ENCODE measurements at regions of chr1 and their contacts with region 1.

Region 1: GRCh38 chr1:27603681-27604578 is at the start of gene AHDC1:
- DNase-seq: peak; percentile 93 to 94
- H3K4me3 ChIP-seq: peak within 1 kb of the TSS; percentile 92 to 100 (median 95)
- H3K27ac ChIP-seq: peak within 1 kb of the TSS; percentile 94 to 97
- H3K4me1 ChIP-seq: peaks cover 18 to 23% of the 10 kb centered on the region in 2 donors
- H3K27me3 ChIP-seq: no peaks in the 10 kb centered on the region
- CTCF ChIP-seq: peak in 1 of 3 donors; percentile 42
- POLR2A ChIP-seq: peak; percentile 75
- total RNA-seq, gene AHDC1: 10.7 to 17.1 (median 15.4) TPM

Region 2: GRCh38 chr1:27392096-27392777 is 211.7 kb before region 1 on chr1 and contains the start of gene GPR3:
- intact Hi-C with region 1: loop called (anchors 10 kb)
- DNase-seq: peak; percentile 86 to 87
- H3K4me3 ChIP-seq: peak within 1 kb of the TSS; percentile 33 to 75 (median 54)
- H3K27ac ChIP-seq: peak within 1 kb of the TSS; percentile 46 to 71
- H3K4me1 ChIP-seq: peaks cover 0 to 8% of the 10 kb centered on the region in 2 donors
- H3K27me3 ChIP-seq: no peaks in the 10 kb centered on the region
- CTCF ChIP-seq: peak; percentile 14 to 47 (median 42)
- POLR2A ChIP-seq: no peak
- total RNA-seq, gene GPR3: 0.16 to 0.66 TPM in 2 of 3 donors, not detected in the other

Region 3: GRCh38 chr1:27556781-27557595 is 46.9 kb before region 1 on chr1:
- intact Hi-C with region 1: loop called (anchors 5 kb)
- DNase-seq: peak; percentile 87 to 96
- H3K4me3 ChIP-seq: peak overlapping the region; percentile 16 to 52 (median 30)
- H3K27ac ChIP-seq: peak overlapping the region; percentile 87 to 92
- H3K4me1 ChIP-seq: peaks cover 25 to 31% of the 10 kb centered on the region in 2 donors
- H3K27me3 ChIP-seq: no peaks in the 10 kb centered on the region
- CTCF ChIP-seq: peak; percentile 75 to 93 (median 83)
- POLR2A ChIP-seq: no peak

Region 4: DNA sequence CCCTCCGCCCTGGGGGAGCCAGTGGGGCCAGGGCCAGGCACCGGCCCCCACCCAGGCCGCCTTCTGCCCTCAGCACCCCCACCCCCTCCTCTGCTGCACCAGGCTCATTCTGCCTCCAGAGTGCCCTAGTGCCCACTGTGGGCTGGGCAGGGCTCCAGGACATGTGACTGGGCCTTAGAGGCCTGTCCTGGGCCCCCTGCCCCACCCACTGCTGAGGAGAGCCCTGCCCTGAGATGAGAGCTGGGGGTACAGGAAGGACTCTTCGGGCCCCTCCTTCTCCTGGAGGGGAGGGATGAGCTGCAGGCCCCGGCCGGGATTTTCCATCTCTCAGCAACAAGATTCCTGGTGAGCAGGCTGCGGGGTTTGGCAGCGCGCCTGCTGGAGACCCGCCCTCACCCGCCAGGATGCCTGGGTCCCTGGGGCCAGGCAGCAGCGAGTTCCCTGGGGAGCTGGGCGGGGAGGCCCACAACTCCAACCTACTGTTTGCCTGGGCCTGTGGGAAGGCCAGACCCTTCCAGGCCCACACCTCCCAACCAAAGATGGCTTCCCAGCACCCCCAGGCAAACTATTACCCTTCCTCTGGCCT is 14.0 kb before region 1 on chr1:
- intact Hi-C with region 1: no loop called
- DNase-seq: no peak
- H3K4me3 ChIP-seq: peak overlapping the region in 1 of 3 donors; percentile 11
- H3K27ac ChIP-seq: peak overlapping the region; percentile 64 to 93
- H3K4me1 ChIP-seq: peaks cover 21 to 33% of the 10 kb centered on the region in 2 donors
- H3K27me3 ChIP-seq: no peaks in the 10 kb centered on the region
- CTCF ChIP-seq: no peak
- POLR2A ChIP-seq: no peak